IMR-90 (cell line): ENCODE measurements at regions of chr4 and their contacts with region 1.

Region 1: DNA sequence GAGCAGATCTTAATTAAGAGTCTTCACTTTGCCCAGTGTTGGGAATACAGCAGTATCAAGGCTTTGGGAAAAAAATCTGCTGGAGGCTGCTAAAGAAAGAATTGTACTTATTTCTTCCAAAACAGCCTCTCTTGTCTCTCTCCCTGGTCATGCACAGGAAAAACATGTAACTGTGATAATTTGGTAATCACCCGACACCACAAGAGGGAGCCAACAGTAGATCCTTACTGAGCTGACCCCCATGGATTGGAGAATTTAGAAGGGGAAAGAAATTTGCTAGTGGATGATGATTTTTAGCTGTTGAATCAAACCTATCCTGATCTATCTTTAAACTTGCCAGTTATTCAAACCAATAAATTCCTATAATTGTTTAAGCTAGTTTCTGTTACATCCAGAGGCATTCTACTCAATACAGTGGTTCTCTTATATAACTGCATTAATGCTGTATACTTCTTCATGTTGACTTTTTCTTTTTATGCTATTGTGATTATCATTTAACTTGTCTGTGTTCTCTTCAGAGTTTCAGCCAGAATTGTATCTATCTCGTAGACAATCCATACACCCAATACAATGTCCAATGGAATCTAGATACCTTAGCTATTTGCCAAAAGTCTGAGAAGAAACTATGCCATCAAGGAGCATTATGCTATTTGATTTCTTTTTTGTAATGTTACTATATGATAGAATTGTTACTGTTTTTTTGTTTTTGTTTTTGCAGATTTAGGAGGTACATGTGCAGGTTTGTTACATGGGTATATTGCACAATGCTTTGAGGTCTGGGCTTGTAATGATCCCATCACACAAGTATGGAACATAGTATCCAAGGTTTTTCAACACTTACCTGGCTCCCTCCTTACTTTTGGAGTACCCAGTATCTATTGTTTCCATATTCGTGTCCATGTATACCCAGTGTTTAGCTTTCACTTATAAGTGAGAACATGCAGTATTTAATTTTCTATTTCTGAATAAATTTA is 31.3 kb upstream of the ARHGEF38 start:
- DNase-seq: peak; percentile 32
- ATAC-seq: peak; percentile 62
- H3K4me3 ChIP-seq: no peak overlapping the region
- H3K27ac ChIP-seq: no peak overlapping the region
- H3K4me1 ChIP-seq: no peaks in the 10 kb centered on the region
- H3K27me3 ChIP-seq: no peaks in the 10 kb centered on the region
- CTCF ChIP-seq: peak; percentile 56
- POLR2A ChIP-seq: no peak
- RAD21 ChIP-seq: peak; percentile 50

Region 2: DNA sequence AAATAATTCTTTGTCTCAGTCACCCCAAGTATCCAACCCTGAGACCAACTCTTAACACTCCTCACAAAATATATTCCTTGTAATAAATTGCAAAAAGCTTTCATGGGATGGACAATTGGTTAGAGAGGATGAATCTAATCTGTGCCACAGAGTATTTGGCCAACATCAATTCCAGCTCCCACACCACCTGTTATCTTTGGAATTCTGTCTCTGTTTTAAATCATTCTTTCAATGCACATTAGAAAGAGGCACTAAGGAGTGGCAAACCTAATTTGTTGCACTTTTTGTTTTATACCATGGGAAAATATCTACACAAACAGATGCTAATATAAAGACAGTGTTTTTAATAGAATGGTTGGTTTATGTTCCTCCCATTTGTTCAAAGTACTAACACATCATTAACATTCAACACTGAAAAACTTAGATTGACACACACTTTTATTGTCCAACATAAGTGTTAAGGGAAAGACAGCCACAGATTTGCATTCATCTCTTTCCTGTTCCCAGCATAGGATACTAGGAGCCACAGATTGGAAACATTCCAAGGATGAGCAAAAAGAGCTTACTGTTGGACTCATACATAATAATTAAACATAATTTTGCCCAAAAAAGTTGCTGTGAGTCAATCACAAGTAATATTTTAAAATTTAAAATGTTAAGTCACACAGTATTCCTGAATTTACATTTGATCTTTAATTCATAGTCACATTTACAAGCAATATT is 163.7 kb before region 1 on chr4:
- CTCF ChIA-PET with region 1: no interaction called
- POLR2A ChIA-PET with region 1: no interaction called
- dilution Hi-C with region 1: no loop called
- in situ Hi-C with region 1: no loop called
- intact Hi-C with region 1: no loop called
- DNase-seq: no peak
- ATAC-seq: no peak
- H3K4me3 ChIP-seq: no peak overlapping the region
- H3K27ac ChIP-seq: no peak overlapping the region
- H3K4me1 ChIP-seq: peaks cover 1% of the 10 kb centered on the region; the same call in 1 of the 2 replicates
- H3K27me3 ChIP-seq: no peaks in the 10 kb centered on the region
- CTCF ChIP-seq: no peak
- POLR2A ChIP-seq: no peak
- RAD21 ChIP-seq: no peak

Region 3: DNA sequence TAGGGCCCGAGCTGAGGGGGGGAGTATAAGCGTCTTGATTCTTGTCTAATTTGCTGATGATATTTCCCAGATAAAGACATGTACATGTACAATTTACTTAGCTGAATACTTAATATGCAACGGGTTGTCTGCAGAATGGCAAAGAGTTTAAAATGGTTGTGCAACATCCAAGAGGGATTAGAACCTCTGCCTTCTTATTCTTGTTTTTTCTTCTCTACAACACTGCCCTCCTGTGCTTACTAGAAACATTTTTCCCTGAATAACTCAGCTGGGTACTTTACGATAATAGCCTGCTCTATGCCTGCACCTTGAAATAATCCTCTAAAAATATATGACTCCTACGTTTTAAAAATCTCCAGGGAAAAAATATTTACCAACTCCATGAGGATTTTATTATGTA is 145.6 kb after region 1 on chr4:
- CTCF ChIA-PET with region 1: no interaction called
- POLR2A ChIA-PET with region 1: no interaction called
- dilution Hi-C with region 1: no loop called
- in situ Hi-C with region 1: no loop called
- intact Hi-C with region 1: loop called (anchors 5 kb)
- DNase-seq: peak; percentile 16
- ATAC-seq: peak; percentile 70
- H3K4me3 ChIP-seq: no peak overlapping the region
- H3K27ac ChIP-seq: no peak overlapping the region
- H3K4me1 ChIP-seq: no peaks in the 10 kb centered on the region
- H3K27me3 ChIP-seq: no peaks in the 10 kb centered on the region
- CTCF ChIP-seq: no peak; the same call in 1 of the 2 replicates
- POLR2A ChIP-seq: no peak
- RAD21 ChIP-seq: no peak

Region 4: DNA sequence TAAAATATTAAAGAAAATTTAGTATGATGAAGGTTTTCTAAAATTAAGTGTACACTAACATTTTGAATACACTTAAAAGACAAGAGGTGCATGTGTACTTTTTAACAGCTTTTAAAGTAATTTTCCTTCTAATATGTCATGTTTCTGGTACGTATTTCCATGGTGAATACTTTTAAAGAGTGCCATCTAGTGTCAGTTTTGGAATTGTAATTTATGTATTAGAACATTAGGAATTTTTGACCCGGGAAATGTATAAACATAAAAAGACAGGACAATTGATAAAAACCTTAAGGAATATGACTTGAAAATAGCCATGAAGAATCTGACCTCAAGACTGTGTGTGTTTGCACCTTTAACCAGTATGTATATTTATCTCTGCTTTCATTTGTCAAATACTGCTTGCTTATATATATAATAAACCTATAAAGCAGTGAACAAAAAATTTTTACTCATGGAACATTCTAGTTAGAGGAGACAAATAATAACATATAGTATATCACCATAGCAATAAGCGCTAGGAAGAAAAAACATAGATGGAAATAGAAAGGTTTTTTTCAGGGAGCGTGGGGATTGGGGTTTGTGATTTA is 194.7 kb after region 1 on chr4:
- CTCF ChIA-PET with region 1: no interaction called
- POLR2A ChIA-PET with region 1: no interaction called
- dilution Hi-C with region 1: no loop called
- in situ Hi-C with region 1: no loop called
- intact Hi-C with region 1: loop called (anchors 5 kb)
- DNase-seq: peak; percentile 45
- ATAC-seq: 0 out of 2 replicates have a peak, but pooled peaks have one; percentile 42
- H3K4me3 ChIP-seq: no peak overlapping the region
- H3K27ac ChIP-seq: no peak overlapping the region
- H3K4me1 ChIP-seq: no peaks in the 10 kb centered on the region
- H3K27me3 ChIP-seq: no peaks in the 10 kb centered on the region
- CTCF ChIP-seq: peak; percentile 56
- POLR2A ChIP-seq: no peak
- RAD21 ChIP-seq: peak; percentile 39

Region 5: DNA sequence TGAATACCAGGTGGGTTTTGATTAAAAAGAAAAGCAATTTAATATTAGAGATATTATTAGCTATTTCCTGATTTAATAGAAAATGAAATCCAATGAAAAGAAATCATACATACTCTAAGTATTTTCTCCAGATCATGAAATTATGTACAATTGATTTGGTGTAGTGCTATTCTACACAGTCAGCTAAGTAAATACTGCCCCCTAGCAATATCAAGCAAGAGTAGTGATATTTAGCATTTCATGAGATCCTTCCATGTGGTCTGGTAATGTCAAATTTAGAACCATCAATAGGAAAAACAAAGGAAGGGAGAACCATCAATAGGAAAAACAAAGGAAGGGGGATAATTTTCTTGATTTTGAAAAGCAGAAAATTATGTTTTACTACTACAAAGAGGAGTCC is 680.3 kb after region 1 on chr4:
- CTCF ChIA-PET with region 1: no interaction called
- POLR2A ChIA-PET with region 1: no interaction called
- dilution Hi-C with region 1: no loop called
- in situ Hi-C with region 1: no loop called
- intact Hi-C with region 1: loop called (anchors 5 kb)
- DNase-seq: peak; percentile 12
- ATAC-seq: peak; percentile 71
- H3K4me3 ChIP-seq: no peak overlapping the region
- H3K27ac ChIP-seq: no peak overlapping the region
- H3K4me1 ChIP-seq: no peaks in the 10 kb centered on the region
- H3K27me3 ChIP-seq: no peaks in the 10 kb centered on the region
- CTCF ChIP-seq: peak; percentile 46
- POLR2A ChIP-seq: no peak
- RAD21 ChIP-seq: peak; percentile 55